Dorsolateral prefrontal cortex (tissue), 120 donors: ENCODE measurements at regions of chr15 and their contacts with region 1.

Region 1: GRCh38 chr15:32651229-32651837 is 9.8 kb downstream of the SCG5 start:
- DNase-seq: peak in 6 of 10 donors; percentile 35 to 68 (median 46)
- H3K4me3 ChIP-seq: no peak overlapping the region
- H3K27ac ChIP-seq: no peak overlapping the region
- H3K27me3 ChIP-seq: no peaks in the 10 kb centered on the region
- CTCF ChIP-seq: peak; percentile 53 to 94 (median 83)

Region 2: DNA sequence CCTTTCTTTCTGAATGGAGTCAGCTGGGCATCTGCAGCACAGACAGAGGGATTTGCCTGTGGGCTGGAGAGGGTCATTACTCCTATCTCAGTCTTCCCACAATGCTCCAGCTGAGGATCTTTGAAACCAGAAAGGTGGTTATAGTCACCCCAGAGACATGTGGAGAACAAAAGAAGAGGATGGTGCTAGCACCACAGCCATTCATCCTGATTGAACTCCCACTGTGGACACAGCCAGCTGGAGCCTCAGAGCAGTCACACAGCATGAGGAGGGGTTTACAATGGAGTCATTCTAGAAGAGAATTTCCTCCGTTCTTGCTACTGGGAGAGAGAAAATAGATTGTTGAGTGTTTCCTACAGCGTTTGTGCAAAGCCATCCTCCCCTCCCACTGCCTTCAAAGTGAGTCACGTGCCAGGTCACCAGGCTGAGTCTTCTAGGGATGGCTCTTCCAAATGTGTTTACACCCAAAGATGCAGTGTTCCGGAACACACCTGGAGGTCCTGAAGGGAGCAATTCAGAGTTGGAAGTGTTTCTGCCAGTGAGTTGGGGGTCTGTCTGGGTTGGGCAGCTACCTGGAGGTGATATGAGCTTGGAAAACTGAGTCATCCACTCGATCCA is 47.5 kb after region 1 on chr15:
- intact Hi-C with region 1: no loop called
- DNase-seq: no peak
- H3K4me3 ChIP-seq: no peak overlapping the region
- H3K27ac ChIP-seq: no peak overlapping the region
- H3K27me3 ChIP-seq: no peaks in the 10 kb centered on the region
- CTCF ChIP-seq: no peak

Region 3: DNA sequence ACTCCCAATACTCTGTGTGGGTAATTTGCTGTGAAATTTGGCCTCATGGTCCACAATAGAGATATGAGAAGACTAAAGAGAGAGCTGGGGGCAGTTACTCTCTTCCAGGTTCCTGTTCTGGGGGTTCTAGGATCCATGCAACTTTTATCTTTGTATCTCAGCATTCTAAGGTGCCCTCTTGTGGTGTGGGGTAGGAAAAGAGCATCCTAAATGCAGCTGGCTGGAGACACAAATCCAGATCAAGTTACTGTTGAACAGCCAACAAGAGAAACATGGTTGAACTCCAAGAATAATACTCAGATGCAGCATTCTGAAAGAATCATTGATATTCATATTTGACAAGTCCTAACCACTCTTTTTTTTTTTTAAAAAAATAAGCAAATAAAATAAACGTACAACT is 304.7 kb after region 1 on chr15:
- intact Hi-C with region 1: loop called (anchors 2 to 5 kb)
- DNase-seq: no peak
- H3K4me3 ChIP-seq: no peak overlapping the region
- H3K27ac ChIP-seq: no peak overlapping the region
- H3K27me3 ChIP-seq: no peaks in the 10 kb centered on the region
- CTCF ChIP-seq: peak in 50 of 56 donors; percentile 23 to 67 (median 50)